ENCODE measurements at regions of chr4 and their contacts with region 1.

Region 1: DNA sequence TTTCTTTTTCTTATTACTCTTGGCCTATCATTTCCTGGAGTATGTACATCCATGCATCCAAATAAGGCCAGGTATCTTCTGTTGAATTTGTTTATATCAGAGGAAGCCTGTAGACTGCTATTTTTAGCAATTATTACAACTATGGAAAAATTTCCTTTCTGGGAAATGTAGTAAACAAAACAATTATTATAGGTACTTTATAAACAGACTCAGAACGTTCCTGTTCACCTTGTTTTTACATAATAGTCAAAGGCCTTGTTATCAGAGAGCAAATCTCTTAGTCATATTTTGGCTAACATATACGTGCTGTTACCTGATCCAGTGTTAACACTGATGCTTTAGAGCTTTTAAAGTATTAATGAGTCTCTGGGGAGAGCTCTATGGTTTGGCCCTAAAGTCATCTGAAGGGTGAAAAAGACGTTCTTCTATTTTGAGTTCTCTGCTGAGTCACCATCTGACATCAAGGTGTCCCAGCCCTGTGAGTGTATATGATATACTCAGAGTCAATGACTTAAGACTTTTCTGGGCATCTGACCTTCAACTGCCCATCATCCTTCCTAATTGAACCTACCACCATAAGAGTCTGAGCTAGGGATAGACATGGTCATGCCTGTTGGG is 7.3 kb downstream of the SPARCL1 start:
- DNase-seq: no peak

Region 2: GRCh38 chr4:87390891-87391575 is 130.8 kb before region 1 on chr4 and contains the start of gene HSD17B11:
- intact Hi-C with region 1: loop called (anchors 5 kb)
- DNase-seq: peak; percentile 97
- total RNA-seq, gene HSD17B11: 11.0 TPM

Region 3: DNA sequence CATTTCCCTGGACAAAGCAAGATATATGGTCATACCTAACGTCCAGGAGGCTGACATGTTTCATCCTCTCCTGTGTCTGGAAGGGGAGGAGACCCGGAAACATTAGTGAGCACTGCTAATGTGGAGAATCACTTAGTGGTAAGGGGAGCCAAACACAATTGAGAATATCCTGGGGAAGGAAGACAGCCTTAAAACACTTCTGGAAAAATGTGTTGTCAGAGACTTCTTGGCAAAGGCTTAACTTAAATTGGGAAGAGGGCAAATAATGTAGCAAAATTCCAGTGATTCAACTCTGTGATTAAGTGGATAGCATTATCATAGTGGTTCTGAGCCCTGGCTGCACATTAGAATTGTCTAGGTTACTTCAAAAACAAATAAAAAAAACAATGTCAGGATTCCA is 32.2 kb before region 1 on chr4:
- intact Hi-C with region 1: loop called (anchors 1 kb)
- DNase-seq: no peak